PC-9 (cell line): ENCODE measurements at regions of chr16 and their contacts with region 1.

Region 1: DNA sequence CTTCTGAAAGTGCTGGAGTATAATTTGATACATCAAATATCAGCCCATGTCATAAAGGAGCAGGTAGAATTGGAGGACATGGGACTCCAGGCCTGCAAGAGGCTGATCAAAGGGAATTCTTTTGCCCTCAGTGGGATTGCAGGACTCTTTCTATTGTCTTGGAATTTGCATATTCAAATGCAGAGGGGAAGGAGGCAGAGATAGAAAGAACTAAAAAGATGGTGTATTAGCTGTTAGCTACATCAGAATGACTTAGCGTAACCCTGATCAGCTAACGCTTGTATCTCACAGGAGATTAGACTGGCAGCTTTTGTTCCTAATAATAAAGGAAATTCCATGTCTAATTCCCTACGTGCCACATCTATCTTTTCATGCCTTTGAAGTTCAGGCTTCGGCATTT is 1014.7 kb upstream of the RBFOX1 start:
- DNase-seq: no peak
- H3K4me3 ChIP-seq: no peak overlapping the region
- H3K27ac ChIP-seq: no peak overlapping the region
- H3K4me1 ChIP-seq: no peaks in the 10 kb centered on the region
- H3K27me3 ChIP-seq: no peaks in the 10 kb centered on the region
- CTCF ChIP-seq: no peak

Region 2: DNA sequence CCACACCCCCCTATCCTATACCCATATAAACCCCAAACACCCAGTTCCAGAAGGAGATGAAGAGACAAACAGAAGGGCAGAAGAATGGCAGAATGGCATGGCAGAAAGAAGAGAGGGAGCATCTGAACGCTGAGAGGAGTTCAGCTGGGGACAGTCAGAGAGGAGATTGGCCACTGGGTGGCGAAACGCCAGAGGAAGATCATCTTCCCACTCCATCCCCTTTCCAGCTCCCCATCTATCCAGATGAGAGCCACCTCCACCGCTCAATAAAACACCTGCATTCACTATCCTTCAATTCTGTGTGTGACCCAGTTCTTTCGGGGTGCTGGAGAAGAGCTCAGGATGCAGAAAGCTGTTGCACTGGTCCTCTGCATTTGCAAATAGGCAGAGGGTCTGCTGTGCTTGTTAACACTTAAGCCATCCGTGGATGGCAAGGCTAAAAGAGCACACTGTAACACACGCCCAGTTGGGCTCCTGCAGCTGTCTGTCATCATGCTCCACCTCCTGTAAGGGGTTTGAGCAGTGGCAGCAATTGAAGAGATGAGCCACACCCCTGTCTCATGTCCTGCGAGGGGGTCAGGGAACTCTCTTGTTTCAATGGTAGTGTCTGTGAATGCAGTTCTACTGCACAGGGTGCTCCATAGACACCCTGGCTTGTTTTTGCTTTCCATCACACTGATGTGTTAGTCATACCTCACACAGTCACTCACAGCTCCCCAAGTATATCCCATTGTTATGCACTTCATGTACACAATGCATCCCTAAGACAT is 20.1 kb before region 1 on chr16:
- CTCF ChIA-PET with region 1: no interaction called
- POLR2A ChIA-PET with region 1: no interaction called
- intact Hi-C with region 1: loop called (anchors 1 kb)
- DNase-seq: no peak
- H3K4me3 ChIP-seq: no peak overlapping the region
- H3K27ac ChIP-seq: no peak overlapping the region
- H3K4me1 ChIP-seq: no peaks in the 10 kb centered on the region
- H3K27me3 ChIP-seq: peaks cover 20% of the 10 kb centered on the region; the same call in 1 of the 2 replicates
- CTCF ChIP-seq: no peak